ENCODE measurements at regions of chr1 and their contacts with region 1.

Region 1: GRCh38 chr1:15323351-15323988 is 76.4 kb downstream of the FHAD1 start:
- DNase-seq: peak; percentile 85
- ATAC-seq: peak; percentile 95
- H3K4me3 Mint-ChIP-seq: no peak overlapping the region
- H3K27ac Mint-ChIP-seq: no peak overlapping the region
- H3K4me1 Mint-ChIP-seq: no peaks in the 10 kb centered on the region
- H3K27me3 Mint-ChIP-seq: peaks cover 6% of the 10 kb centered on the region

Region 2: DNA sequence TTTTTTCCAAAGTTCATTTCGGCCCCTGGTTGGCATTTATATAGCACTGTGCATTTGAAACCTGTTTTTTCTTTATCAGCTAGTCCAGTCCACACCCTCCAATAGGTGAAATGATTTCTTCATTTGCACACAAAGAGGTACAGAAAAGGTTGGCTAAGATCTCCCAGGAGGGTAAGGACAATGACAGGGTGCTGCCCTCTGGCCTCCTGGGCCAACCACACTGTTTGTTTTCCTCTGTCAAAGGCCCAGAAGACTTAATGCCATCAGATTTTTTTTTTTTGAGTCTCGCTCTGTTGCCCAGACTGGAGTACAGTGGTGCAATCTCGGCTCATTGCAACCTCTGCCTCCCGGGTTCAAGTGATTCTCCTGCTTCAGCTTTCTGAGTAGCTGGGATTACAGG is 16.1 kb after region 1 on chr1:
- CTCF ChIA-PET with region 1: interaction called, 13 read pairs
- POLR2A ChIA-PET with region 1: no interaction called
- intact Hi-C with region 1: no loop called
- DNase-seq: no peak
- ATAC-seq: no peak
- H3K4me3 Mint-ChIP-seq: no peak overlapping the region
- H3K27ac Mint-ChIP-seq: no peak overlapping the region
- H3K4me1 Mint-ChIP-seq: peaks cover 7% of the 10 kb centered on the region
- H3K27me3 Mint-ChIP-seq: peaks cover 16% of the 10 kb centered on the region

Region 3: GRCh38 chr1:15409388-15410222 is 86.1 kb after region 1 on chr1 and contains the start of gene EFHD2:
- CTCF ChIA-PET with region 1: interaction called, 10 read pairs
- POLR2A ChIA-PET with region 1: no interaction called
- intact Hi-C with region 1: no loop called
- DNase-seq: peak; percentile 90
- ATAC-seq: peak; percentile 86
- H3K4me3 Mint-ChIP-seq: peak within 1 kb of the TSS; percentile 87
- H3K27ac Mint-ChIP-seq: peak within 1 kb of the TSS; percentile 81
- H3K4me1 Mint-ChIP-seq: peaks cover 28% of the 10 kb centered on the region
- H3K27me3 Mint-ChIP-seq: peaks cover 5% of the 10 kb centered on the region
- total RNA-seq, gene EFHD2: 43.1 to 48.6 TPM

Region 4: GRCh38 chr1:15454256-15454655 is 130.8 kb after region 1 on chr1:
- CTCF ChIA-PET with region 1: no interaction called
- POLR2A ChIA-PET with region 1: no interaction called
- intact Hi-C with region 1: no loop called
- DNase-seq: no peak
- ATAC-seq: no peak
- H3K4me3 Mint-ChIP-seq: no peak overlapping the region
- H3K27ac Mint-ChIP-seq: no peak overlapping the region
- H3K4me1 Mint-ChIP-seq: no peaks in the 10 kb centered on the region
- H3K27me3 Mint-ChIP-seq: peaks cover 2% of the 10 kb centered on the region

Region 5: GRCh38 chr1:15501208-15502032 is 177.9 kb after region 1 on chr1:
- CTCF ChIA-PET with region 1: no interaction called
- POLR2A ChIA-PET with region 1: no interaction called
- intact Hi-C with region 1: loop called in 1 of 2 experiments (anchors 2 kb)
- DNase-seq: peak; percentile 83
- ATAC-seq: peak; percentile 85
- H3K4me3 Mint-ChIP-seq: no peak overlapping the region
- H3K27ac Mint-ChIP-seq: no peak overlapping the region
- H3K4me1 Mint-ChIP-seq: no peaks in the 10 kb centered on the region
- H3K27me3 Mint-ChIP-seq: no peaks in the 10 kb centered on the region

Region 6: GRCh38 chr1:15543589-15544568 is 220.4 kb after region 1 on chr1:
- CTCF ChIA-PET with region 1: no interaction called
- POLR2A ChIA-PET with region 1: no interaction called
- intact Hi-C with region 1: no loop called
- DNase-seq: no peak
- ATAC-seq: no peak
- H3K4me3 Mint-ChIP-seq: no peak overlapping the region
- H3K27ac Mint-ChIP-seq: peak overlapping the region; percentile 12
- H3K4me1 Mint-ChIP-seq: no peaks in the 10 kb centered on the region
- H3K27me3 Mint-ChIP-seq: no peaks in the 10 kb centered on the region